Heart left ventricle (tissue), 16 donors: ENCODE measurements at regions of chr22 and their contacts with region 1.

Region 1: DNA sequence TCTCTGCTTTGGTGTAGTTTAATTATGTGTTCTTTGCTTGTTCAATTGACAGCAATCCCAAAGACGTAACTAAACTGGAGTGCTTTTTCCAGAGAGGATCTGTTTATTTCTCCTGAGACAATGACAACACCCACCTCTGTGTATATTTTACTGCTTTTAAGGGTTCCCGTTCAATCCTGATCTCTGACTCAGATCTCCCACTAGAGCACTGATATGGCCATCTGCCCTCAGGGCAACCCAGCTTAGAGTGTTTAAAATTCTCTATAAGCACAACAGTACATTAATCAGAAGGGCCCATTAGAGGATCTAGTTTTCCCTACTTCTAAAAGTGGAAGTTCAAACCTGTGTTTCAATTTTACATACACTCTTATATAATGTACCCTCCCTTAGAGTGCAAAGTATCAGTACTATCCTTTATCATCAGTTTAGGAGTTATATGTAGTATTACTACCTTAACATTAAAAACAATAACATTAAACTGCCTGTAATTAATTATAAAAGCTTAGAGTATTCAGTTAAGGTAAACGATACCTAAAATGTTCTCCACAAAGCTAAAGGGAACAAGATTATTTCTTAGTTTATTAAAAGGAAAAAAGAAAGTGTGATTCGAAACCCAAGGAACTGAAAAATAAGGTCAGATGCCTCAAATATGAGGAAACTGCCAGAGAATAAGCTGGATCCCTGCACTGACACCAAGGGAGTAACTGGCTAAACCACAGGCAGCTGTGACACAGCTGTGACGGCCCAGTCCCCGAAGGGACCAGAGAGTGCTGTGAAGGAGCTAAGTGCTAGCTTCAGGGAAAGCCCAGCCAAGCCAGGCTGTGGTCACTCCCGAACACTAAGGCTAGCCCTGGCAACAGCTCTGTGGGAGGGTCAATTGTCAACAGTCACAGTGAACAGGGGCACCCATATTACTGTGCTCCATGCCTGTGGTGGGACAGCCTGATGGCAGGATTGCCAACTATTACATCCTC is 15.2 kb downstream of the UFD1 start:
- DNase-seq: peak in 2 of 5 donors; percentile 55 to 77
- ATAC-seq: peak; percentile 53 to 83 (median 72)
- H3K4me3 ChIP-seq: no peak overlapping the region
- H3K27ac ChIP-seq: peak overlapping the region in 1 of 12 donors; percentile 17
- H3K4me1 ChIP-seq: peaks cover 0 to 7% (median 0%) of the 10 kb centered on the region in 12 donors
- H3K27me3 ChIP-seq: no peaks in the 10 kb centered on the region
- CTCF ChIP-seq: no peak
- POLR2A ChIP-seq: no peak

Region 2: DNA sequence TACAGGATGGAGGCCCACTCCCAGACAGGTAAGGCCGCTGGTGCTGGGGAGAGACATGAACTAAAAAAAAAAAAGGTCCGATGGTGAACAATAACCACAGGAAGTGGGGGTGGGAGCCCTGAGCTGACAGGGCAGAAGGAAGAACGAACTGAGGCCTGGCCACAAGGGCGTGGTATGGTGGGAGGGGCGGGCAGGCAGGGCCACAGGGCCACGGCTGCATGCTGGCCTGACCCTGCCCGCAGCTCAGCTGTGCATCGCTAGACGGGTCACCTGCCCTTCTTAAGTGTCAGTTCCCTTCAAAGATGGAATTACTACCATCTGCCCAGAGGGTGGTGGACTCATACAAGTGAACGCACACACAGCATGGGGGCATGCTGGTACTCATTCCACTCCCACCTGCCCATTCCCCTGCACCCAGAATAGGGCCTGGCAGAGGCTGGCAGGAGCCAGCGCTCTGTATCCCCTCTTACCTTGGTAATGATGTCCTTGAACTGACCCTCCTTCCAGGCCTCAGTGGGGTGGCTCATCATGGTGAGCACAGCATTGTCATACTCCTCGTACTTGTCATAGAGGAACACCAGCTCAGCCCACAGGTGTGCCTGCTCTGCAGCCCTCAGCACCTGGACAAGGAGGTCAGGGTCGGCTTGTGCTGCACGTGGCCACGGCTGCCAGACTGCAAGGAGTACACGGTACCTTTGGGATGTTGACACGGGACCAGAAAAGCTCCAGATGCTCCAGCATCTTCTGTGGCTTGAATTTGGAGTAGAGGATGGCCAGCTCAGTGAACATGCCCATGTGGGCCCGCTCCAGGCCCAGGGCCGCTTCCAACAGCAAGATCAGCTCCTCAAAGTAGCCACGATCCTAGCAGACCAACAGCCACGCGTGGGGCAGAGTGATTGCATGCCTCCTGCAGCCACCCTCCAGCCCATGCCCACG is 267.7 kb before region 1 on chr22:
- intact Hi-C with region 1: loop called in 1 of 10 experiments (anchors 10 kb)
- DNase-seq: no peak
- ATAC-seq: peak in 1 of 4 donors; percentile 11
- H3K4me3 ChIP-seq: no peak overlapping the region
- H3K27ac ChIP-seq: no peak overlapping the region
- H3K4me1 ChIP-seq: no peaks in the 10 kb centered on the region
- H3K27me3 ChIP-seq: no peaks in the 10 kb centered on the region
- CTCF ChIP-seq: no peak
- POLR2A ChIP-seq: no peak

Region 3: DNA sequence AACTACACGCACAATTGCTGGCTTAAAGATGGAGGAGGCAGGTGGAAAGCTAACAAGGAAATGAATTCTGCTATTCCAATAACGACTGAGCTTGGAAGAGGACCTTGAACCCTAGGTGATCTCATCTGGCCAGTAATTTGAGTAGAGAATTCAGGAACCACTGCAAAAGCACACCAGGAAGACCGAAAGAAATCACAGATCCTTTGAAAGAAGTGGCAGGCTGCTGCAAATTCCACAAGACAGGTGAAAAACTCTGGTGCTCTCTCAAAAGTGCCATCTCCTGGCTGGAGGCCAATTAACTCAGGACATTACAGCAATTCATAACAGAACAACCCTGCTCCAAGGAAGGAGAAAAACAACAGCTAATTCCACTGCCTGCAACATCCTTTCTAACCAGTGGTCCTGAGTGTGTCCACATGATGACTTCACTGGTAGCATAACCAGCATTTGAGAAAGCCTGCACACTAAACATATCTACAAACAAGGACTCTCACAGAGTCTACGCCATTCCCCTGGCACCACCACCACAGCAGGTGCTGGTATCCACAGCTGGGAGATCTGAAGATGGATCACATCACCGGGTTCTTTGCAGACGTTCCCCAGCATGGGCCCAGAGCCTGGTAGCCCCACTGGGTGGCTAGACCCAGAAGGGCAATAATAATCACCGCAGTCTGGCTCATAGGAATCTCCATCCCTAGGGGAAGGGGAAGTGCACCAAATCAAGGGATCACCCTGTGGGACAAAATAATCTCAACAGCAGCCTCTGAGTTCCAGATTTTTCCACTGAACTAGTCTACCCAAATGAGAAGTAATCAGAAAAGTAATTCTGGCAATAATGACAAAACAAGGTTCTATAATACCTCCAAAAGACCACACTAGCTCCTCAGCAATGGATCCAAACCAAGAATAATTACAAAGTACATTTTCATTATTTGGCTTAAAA is 127.4 kb before region 1 on chr22:
- intact Hi-C with region 1: no loop called
- DNase-seq: no peak
- ATAC-seq: no peak
- H3K4me3 ChIP-seq: no peak overlapping the region
- H3K27ac ChIP-seq: no peak overlapping the region
- H3K4me1 ChIP-seq: no peaks in the 10 kb centered on the region
- H3K27me3 ChIP-seq: no peaks in the 10 kb centered on the region
- CTCF ChIP-seq: no peak
- POLR2A ChIP-seq: no peak

Region 4: GRCh38 chr22:19368876-19369275 is 94.9 kb before region 1 on chr22:
- intact Hi-C with region 1: no loop called
- DNase-seq: no peak
- ATAC-seq: no peak
- H3K4me3 ChIP-seq: no peak overlapping the region
- H3K27ac ChIP-seq: no peak overlapping the region
- H3K4me1 ChIP-seq: no peaks in the 10 kb centered on the region
- H3K27me3 ChIP-seq: no peaks in the 10 kb centered on the region
- CTCF ChIP-seq: no peak
- POLR2A ChIP-seq: no peak

Region 5: DNA sequence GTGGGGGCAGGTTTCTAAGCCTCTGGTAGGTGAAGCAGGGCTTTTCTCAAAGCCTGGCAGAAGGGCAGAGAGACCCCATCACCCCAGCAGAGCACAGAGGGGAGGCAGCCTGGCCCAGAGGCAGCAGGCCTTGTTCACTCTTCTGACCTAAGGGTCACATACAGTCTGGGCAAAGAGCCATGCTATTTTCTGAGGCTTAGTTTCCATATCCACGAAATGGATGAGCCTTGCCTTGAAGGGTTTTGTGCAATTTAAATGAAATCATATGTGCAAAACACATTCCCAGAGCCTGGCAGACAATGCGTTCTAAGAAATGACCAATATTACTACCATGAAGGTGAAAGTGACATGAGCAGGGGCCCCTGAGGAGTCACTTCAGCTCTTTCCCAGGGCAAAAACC is 76.7 kb before region 1 on chr22:
- intact Hi-C with region 1: loop called in 1 of 10 experiments (anchors 10 kb)
- DNase-seq: no peak
- ATAC-seq: no peak
- H3K4me3 ChIP-seq: no peak overlapping the region
- H3K27ac ChIP-seq: no peak overlapping the region
- H3K4me1 ChIP-seq: peaks cover 0 to 6% (median 0%) of the 10 kb centered on the region in 12 donors
- H3K27me3 ChIP-seq: no peaks in the 10 kb centered on the region
- CTCF ChIP-seq: no peak
- POLR2A ChIP-seq: no peak

Region 6: GRCh38 chr22:19610501-19611253 is 146.9 kb after region 1 on chr22:
- intact Hi-C with region 1: no loop called
- DNase-seq: no peak
- ATAC-seq: no peak
- H3K4me3 ChIP-seq: no peak overlapping the region
- H3K27ac ChIP-seq: no peak overlapping the region
- H3K4me1 ChIP-seq: peaks cover 0 to 7% (median 0%) of the 10 kb centered on the region in 12 donors
- H3K27me3 ChIP-seq: peaks cover 0 to 19% (median 0%) of the 10 kb centered on the region in 9 donors
- CTCF ChIP-seq: no peak
- POLR2A ChIP-seq: no peak